ENCODE measurements at regions of chr2 and their contacts with region 1.

Region 1: DNA sequence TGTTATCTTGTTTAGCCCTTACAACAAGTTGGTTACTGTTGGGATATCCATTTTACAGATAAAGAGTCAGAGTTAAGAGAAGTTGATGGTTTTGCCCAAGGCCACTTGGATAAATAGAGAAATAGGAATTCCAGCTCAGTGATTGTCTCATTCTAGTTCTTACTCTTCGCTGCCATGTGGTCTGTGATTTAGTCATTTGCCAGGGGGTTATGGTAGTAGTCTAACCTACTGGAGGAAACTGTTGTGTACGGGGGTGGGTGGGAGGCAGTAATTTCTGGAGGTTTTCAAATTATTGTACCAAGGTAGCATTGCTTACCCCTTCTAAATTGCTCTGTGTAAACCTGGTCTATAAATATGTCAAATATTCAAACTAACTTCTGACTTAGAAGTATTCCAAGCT is 110.4 kb downstream of the MAP2 start:
- DNase-seq: no peak
- ATAC-seq: no peak
- H3K4me3 ChIP-seq: no peak overlapping the region
- H3K4me3 Mint-ChIP-seq: no peak overlapping the region
- H3K27ac ChIP-seq: no peak overlapping the region
- H3K27ac Mint-ChIP-seq: no peak overlapping the region
- H3K4me1 ChIP-seq: no peaks in the 10 kb centered on the region
- H3K4me1 Mint-ChIP-seq: no peaks in the 10 kb centered on the region
- H3K27me3 ChIP-seq: no peaks in the 10 kb centered on the region
- H3K27me3 Mint-ChIP-seq: no peaks in the 10 kb centered on the region

Region 2: DNA sequence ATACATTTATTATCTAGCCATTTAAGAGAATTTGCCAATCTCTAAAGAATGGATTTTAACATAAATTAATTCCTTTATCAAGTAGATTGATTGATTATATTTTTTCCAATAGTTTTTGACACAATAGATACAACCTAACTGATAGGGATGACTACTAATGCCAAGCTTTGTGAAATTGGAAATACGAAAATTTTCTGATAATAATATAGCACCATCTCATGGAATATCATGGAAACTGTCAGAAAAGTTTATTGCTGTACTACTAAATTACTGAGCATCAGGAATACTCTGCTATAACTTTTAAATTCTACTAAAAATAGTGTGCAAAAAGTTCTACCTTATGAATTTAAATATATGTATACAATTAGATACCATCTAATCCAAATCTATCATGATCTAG is 212.2 kb before region 1 on chr2:
- CTCF ChIA-PET with region 1: no interaction called
- POLR2A ChIA-PET with region 1: no interaction called
- DNase-seq: no peak
- ATAC-seq: no peak
- H3K4me3 ChIP-seq: no peak overlapping the region
- H3K4me3 Mint-ChIP-seq: no peak overlapping the region
- H3K27ac ChIP-seq: no peak overlapping the region
- H3K27ac Mint-ChIP-seq: no peak overlapping the region
- H3K4me1 ChIP-seq: no peaks in the 10 kb centered on the region
- H3K4me1 Mint-ChIP-seq: no peaks in the 10 kb centered on the region
- H3K27me3 ChIP-seq: no peaks in the 10 kb centered on the region
- H3K27me3 Mint-ChIP-seq: no peaks in the 10 kb centered on the region

Region 3: GRCh38 chr2:209391776-209392401 is 142.3 kb before region 1 on chr2:
- CTCF ChIA-PET with region 1: interaction called in 1 of 2 experiments, 10 read pairs
- POLR2A ChIA-PET with region 1: no interaction called
- DNase-seq: no peak
- ATAC-seq: no peak
- H3K4me3 ChIP-seq: no peak overlapping the region
- H3K4me3 Mint-ChIP-seq: no peak overlapping the region
- H3K27ac ChIP-seq: no peak overlapping the region
- H3K27ac Mint-ChIP-seq: no peak overlapping the region
- H3K4me1 ChIP-seq: no peaks in the 10 kb centered on the region
- H3K4me1 Mint-ChIP-seq: no peaks in the 10 kb centered on the region
- H3K27me3 ChIP-seq: peaks cover 0 to 2% of the 10 kb centered on the region in 2 experiments
- H3K27me3 Mint-ChIP-seq: no peaks in the 10 kb centered on the region

Measured in T-cell (primary cell).